Heart left ventricle (tissue), 16 donors: ENCODE measurements at regions of chr3 and their contacts with region 1.

Region 1: GRCh38 chr3:62558549-62559112 is 185.3 kb upstream of the FEZF2 start:
- DNase-seq: no peak
- ATAC-seq: no peak
- H3K4me3 ChIP-seq: no peak overlapping the region
- H3K27ac ChIP-seq: no peak overlapping the region
- H3K4me1 ChIP-seq: peaks cover 0 to 9% (median 0%) of the 10 kb centered on the region in 12 donors
- H3K27me3 ChIP-seq: no peaks in the 10 kb centered on the region
- CTCF ChIP-seq: peak in 7 of 12 donors; percentile 11 to 31 (median 22)
- POLR2A ChIP-seq: no peak

Region 2: DNA sequence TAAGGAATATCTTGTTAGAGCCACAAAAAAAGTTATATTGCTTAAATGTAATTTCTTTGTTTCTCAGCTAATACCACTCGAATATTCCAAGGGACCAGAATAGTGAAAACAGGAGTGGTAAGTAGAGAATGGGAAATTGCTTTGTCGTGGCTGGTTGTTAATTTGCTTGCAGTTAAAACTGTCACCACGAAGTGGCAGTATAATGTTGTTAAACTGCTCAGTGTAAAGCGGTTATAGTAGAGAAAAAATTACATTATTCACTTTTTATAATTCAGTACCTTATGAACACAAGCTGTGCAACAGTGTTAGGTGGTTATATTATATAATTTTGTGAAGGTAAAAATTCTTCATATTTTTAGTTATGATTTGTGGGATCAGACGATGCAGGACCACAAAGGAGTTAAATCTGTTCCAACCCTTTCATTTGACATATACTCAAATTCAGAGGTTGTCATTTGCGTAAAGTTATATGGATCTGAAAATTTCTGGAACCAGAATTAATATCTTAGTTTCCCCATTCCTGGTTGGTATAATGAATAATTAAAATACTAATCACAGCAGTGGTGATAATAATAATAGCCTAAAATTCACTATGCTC is 357.1 kb before region 1 on chr3:
- intact Hi-C with region 1: loop called in 3 of 10 experiments (anchors 10 kb)
- DNase-seq: no peak
- ATAC-seq: peak in 1 of 4 donors; percentile 51
- H3K4me3 ChIP-seq: no peak overlapping the region
- H3K27ac ChIP-seq: no peak overlapping the region
- H3K4me1 ChIP-seq: no peaks in the 10 kb centered on the region
- H3K27me3 ChIP-seq: no peaks in the 10 kb centered on the region
- CTCF ChIP-seq: peak; percentile 35 to 69 (median 52)
- POLR2A ChIP-seq: no peak

Region 3: DNA sequence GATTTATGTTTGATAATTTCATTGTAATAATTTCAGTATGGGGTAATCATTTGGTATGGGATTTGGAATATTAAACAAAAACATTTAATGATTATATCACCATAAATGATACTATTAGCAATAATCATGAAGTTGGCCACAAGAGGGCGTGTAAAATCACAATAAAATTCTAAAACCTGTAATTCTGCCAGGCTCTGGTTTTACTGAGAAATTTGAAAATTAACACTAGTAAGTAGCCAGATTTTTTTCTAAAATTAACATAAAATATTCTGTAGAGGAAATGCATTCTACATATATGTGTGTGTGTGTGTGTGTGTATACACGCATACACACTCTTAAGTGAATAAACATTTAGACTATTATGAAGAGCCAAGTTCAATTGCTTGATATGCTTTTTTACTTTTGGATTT is 225.8 kb before region 1 on chr3:
- intact Hi-C with region 1: loop called in 8 of 10 experiments (anchors 2 to 10 kb)
- DNase-seq: no peak
- ATAC-seq: no peak
- H3K4me3 ChIP-seq: no peak overlapping the region
- H3K27ac ChIP-seq: no peak overlapping the region
- H3K4me1 ChIP-seq: no peaks in the 10 kb centered on the region
- H3K27me3 ChIP-seq: no peaks in the 10 kb centered on the region
- CTCF ChIP-seq: peak; percentile 37 to 65 (median 54)
- POLR2A ChIP-seq: no peak

Region 4: DNA sequence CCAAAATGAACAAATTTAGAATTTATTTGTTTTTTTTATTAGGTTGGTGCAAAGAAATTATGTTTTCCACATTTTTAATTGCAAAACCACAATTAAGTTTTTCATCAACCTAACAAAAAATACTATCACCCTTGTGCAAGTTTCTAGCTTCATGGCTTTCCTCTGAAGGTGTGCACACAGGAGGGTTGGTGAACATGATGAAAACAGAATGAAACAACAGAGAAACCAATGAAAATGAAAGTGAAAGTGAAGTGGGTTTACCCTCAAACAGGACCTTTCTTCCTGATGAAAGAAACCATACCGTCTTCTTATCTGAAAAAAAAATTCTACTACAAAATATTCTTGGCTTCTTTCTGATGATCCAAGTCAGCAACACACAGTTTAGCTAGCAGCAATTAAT is 113.4 kb before region 1 on chr3:
- intact Hi-C with region 1: no loop called
- DNase-seq: no peak
- ATAC-seq: no peak
- H3K4me3 ChIP-seq: peak overlapping the region in 3 of 12 donors; percentile 15 to 21 (median 20)
- H3K27ac ChIP-seq: no peak overlapping the region
- H3K4me1 ChIP-seq: no peaks in the 10 kb centered on the region
- H3K27me3 ChIP-seq: no peaks in the 10 kb centered on the region
- CTCF ChIP-seq: no peak
- POLR2A ChIP-seq: no peak

Region 5: GRCh38 chr3:62863653-62864052 is 305.0 kb after region 1 on chr3:
- intact Hi-C with region 1: no loop called
- DNase-seq: no peak
- ATAC-seq: no peak
- H3K4me3 ChIP-seq: no peak overlapping the region
- H3K27ac ChIP-seq: no peak overlapping the region
- H3K4me1 ChIP-seq: no peaks in the 10 kb centered on the region
- H3K27me3 ChIP-seq: no peaks in the 10 kb centered on the region
- CTCF ChIP-seq: no peak
- POLR2A ChIP-seq: no peak